ENCODE measurements at regions of chr1 and their contacts with region 1.

Region 1: DNA sequence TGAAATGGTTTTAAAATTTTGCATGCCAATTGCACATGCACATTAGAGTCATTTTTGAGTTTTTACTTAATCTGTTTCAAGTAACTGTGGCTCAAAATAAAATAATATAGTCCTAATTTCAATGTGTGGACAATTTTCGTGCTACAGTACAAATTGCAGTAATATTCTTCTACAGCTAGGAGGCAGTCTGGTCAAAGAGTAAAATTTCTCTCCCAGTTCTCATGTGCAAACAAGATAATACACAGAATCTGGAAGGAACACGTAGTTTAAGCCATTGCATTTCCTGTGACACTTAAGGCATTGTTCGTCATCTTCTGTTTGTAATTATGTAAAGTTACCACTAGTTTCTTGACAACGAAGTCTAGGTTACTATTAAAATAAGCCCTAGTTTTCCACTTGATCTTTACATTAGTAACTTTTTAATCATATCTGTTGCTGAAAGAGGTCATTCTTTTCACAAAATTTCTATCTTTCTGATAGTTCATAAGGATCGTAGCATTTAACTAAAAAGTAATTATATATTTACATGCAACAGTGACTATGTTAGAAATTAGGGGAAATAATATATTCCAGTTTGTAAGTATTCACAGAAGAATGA is 28.9 kb downstream of the ODR4 start:
- DNase-seq: no peak
- ATAC-seq: peak; percentile 78
- H3K4me3 Mint-ChIP-seq: no peak overlapping the region
- H3K27ac Mint-ChIP-seq: no peak overlapping the region
- H3K4me1 Mint-ChIP-seq: no peaks in the 10 kb centered on the region
- H3K27me3 Mint-ChIP-seq: no peaks in the 10 kb centered on the region

Region 2: DNA sequence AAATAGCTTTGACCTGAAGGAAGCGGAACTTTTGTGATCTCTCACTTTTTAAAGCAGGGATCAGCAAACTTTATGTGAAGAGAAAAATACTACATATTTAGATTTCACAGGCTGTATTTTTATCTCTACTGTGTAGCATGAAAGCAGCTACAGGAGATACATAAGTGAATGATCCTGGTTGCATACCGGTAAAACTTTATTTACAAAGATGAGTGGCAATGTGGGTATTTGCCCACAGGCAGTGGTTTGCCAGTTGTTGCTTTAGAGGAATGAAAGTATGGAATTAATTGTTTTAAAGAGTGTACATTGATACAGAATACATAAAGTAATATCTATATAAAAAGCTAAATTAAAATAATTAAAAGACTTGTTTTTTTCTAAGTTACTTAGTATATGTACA is 11.1 kb before region 1 on chr1:
- CTCF ChIA-PET with region 1: interaction called, 12 read pairs
- POLR2A ChIA-PET with region 1: no interaction called
- intact Hi-C with region 1: no loop called
- DNase-seq: no peak
- ATAC-seq: no peak
- H3K4me3 Mint-ChIP-seq: no peak overlapping the region
- H3K27ac Mint-ChIP-seq: no peak overlapping the region
- H3K4me1 Mint-ChIP-seq: no peaks in the 10 kb centered on the region
- H3K27me3 Mint-ChIP-seq: no peaks in the 10 kb centered on the region

Measured in activated CD4-positive, alpha-beta T cell treated with anti-CD3 and anti-CD28 coated beads for 36 hours (primary cell).